GM12878 (cell line): ENCODE measurements at regions of chr10 and their contacts with region 1.

Region 1: DNA sequence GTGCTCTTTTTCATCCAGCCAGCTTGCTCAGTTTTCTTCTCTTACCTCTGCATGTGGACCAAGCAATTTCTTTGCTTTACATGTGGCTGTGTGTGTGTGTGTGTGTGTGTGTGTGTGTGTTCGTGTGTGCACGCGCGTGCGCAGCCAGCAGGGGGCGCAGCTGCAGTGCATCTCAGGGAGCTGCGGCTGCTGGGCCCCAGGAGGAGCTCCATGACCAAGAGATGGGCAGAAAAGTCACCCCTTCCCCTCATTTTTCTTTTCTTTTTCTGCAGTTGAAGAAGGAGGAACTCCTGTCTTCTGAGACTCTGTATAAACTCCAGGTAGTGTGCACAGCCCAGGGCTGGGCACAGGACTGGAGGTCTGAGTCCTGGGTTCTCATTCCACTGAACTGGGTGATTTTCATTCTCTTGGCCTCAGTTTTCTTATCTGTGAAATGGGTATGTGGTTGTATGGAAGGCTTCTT is 41.8 kb downstream of the BLNK start:
- DNase-seq: peak; percentile 24
- ATAC-seq: peak; percentile 86
- H3K4me3 ChIP-seq: no peak overlapping the region
- H3K27ac ChIP-seq: peak overlapping the region; percentile 51
- H3K4me1 ChIP-seq: peaks cover 13% of the 10 kb centered on the region
- H3K27me3 ChIP-seq: no peaks in the 10 kb centered on the region
- CTCF ChIP-seq: peak; percentile 93 to 98 (median 93)
- EP300 ChIP-seq: no peak
- POLR2A ChIP-seq: no peak; the same call in 1 of the 2 replicates
- RAD21 ChIP-seq: peak; percentile 89

Region 2: DNA sequence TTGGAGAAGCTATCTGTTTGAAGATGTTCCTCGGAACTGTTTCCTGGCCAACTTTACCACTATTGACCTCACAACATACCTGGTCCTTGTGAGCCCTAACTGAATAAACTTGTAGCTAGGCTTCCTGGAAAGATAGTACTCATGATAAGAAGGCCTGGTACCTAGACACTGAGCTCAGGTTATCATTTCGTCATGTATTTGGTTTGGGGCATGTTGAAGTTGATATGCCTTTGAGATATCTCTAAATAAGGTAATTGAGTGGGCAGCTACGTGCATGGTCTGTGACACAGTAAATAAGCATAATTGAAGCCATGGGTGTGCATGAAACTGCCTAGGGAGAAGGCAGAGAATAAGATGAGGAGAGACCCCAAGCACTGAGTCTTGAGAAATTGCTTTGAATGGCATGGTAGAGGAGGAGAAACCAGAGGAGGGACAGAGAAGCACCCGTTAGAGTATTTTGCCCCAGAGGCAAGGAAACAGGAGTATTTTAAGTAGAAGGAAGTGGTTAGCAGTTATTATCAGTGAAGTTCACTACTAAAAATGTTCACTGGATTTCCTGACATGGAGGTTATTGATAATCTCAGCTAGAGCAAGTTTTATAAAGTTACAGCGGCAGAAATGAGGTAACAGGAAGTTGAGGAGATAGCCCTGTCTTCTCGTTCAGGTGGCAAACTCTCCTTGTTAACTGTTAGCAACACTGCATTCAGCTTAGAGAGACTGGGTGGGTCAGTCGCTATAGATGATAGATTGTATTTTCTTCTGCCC is 266.2 kb before region 1 on chr10:
- CTCF ChIA-PET with region 1: no interaction called
- POLR2A ChIA-PET with region 1: no interaction called
- RAD21 ChIA-PET with region 1: no interaction called
- SMC1A ChIA-PET with region 1: no interaction called
- in situ Hi-C with region 1: no loop called
- intact Hi-C with region 1: no loop called
- DNase-seq: no peak
- ATAC-seq: peak; percentile 65
- H3K4me3 ChIP-seq: no peak overlapping the region; the same call in 1 of the 2 replicates
- H3K27ac ChIP-seq: peak overlapping the region; percentile 56; the same call in 1 of the 2 replicates
- H3K4me1 ChIP-seq: peaks cover 15% of the 10 kb centered on the region
- H3K27me3 ChIP-seq: no peaks in the 10 kb centered on the region
- CTCF ChIP-seq: no peak
- EP300 ChIP-seq: no peak
- POLR2A ChIP-seq: no peak
- RAD21 ChIP-seq: no peak

Region 3: GRCh38 chr10:96017191-96017687 is 212.4 kb before region 1 on chr10:
- CTCF ChIA-PET with region 1: interaction called, 35 read pairs
- POLR2A ChIA-PET with region 1: no interaction called
- RAD21 ChIA-PET with region 1: interaction called, 21 read pairs
- SMC1A ChIA-PET with region 1: interaction called, 13 read pairs
- in situ Hi-C with region 1: loop called (anchors 5 kb)
- intact Hi-C with region 1: no loop called
- DNase-seq: peak; percentile 32
- ATAC-seq: peak; percentile 99
- H3K4me3 ChIP-seq: no peak overlapping the region
- H3K27ac ChIP-seq: no peak overlapping the region
- H3K4me1 ChIP-seq: no peaks in the 10 kb centered on the region
- H3K27me3 ChIP-seq: no peaks in the 10 kb centered on the region
- CTCF ChIP-seq: peak; percentile 75 to 79 (median 77)
- EP300 ChIP-seq: no peak
- POLR2A ChIP-seq: no peak
- RAD21 ChIP-seq: peak; percentile 90

Region 4: GRCh38 chr10:96252730-96253129 is 23.1 kb after region 1 on chr10:
- CTCF ChIA-PET with region 1: interaction called, 14 read pairs
- POLR2A ChIA-PET with region 1: interaction called, 3 read pairs
- RAD21 ChIA-PET with region 1: interaction called, 23 read pairs
- SMC1A ChIA-PET with region 1: interaction called, 11 read pairs
- in situ Hi-C with region 1: no loop called
- intact Hi-C with region 1: no loop called
- DNase-seq: no peak
- ATAC-seq: no peak; the same call in 2 of the 3 replicates
- H3K4me3 ChIP-seq: no peak overlapping the region
- H3K27ac ChIP-seq: no peak overlapping the region
- H3K4me1 ChIP-seq: peaks cover 7% of the 10 kb centered on the region
- H3K27me3 ChIP-seq: no peaks in the 10 kb centered on the region
- CTCF ChIP-seq: no peak
- EP300 ChIP-seq: no peak
- POLR2A ChIP-seq: no peak
- RAD21 ChIP-seq: no peak

Region 5: DNA sequence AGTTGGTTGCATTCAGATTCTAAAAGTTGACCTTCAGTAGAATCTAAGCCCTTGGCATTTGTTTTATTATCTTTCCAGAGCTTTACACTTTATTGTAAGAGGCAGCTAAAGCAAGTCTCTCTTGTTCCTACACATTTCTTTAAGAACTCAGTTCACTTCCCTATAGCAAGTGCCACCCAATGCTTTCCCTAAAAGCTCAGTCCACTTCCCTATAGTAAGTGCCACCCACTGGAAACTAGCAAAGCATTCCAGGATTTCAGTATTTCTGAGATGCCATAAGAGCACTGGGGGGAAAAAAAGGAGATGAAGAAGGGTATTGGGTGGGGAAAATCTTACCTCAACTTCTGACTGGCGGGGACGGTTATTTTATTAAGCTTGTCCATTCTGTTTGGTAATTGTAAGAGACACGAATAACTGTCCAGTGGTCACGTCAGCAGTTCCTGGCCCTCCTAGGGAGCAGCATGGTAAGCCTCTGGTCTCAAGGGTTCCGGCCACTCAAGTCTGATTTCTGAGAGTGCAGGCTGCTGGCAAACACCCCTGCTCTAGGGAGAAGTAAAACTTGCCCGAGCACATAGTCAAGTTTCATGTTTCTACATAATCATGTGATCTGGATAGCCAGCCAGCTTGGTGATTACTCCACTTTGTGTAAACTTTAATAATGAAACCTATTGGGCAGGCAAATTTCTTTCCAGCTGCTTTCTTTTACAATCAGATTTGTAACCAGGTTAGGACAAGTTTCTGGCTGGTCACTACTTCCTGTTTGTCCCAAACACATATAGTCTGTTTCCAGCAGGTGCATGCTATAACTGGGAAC is 41.6 kb after region 1 on chr10 and contains the start of gene BLNK:
- CTCF ChIA-PET with region 1: interaction called, 219 read pairs
- POLR2A ChIA-PET with region 1: interaction called, 21 read pairs
- RAD21 ChIA-PET with region 1: interaction called, 159 read pairs
- SMC1A ChIA-PET with region 1: interaction called, 123 read pairs
- in situ Hi-C with region 1: no loop called
- intact Hi-C with region 1: loop called (anchors 2 kb)
- DNase-seq: peak; percentile 92
- ATAC-seq: peak; percentile 79
- H3K4me3 ChIP-seq: peak within 1 kb of the TSS; percentile 89
- H3K27ac ChIP-seq: peak within 1 kb of the TSS; percentile 98
- H3K4me1 ChIP-seq: peaks cover 32% of the 10 kb centered on the region
- H3K27me3 ChIP-seq: no peaks in the 10 kb centered on the region
- CTCF ChIP-seq: no peak
- EP300 ChIP-seq: peak in 1 of 2 experiments; percentile 74; a peak in 2 of 4 replicates
- POLR2A ChIP-seq: peak; percentile 93
- RAD21 ChIP-seq: no peak
- polyA plus RNA-seq, gene BLNK: 165 to 201 TPM

Region 6: GRCh38 chr10:96309628-96310320 is 80.2 kb after region 1 on chr10:
- CTCF ChIA-PET with region 1: interaction called, 12 read pairs
- POLR2A ChIA-PET with region 1: no interaction called
- RAD21 ChIA-PET with region 1: interaction called, 7 read pairs
- SMC1A ChIA-PET with region 1: interaction called, 6 read pairs
- in situ Hi-C with region 1: no loop called
- intact Hi-C with region 1: no loop called
- DNase-seq: no peak
- ATAC-seq: no peak
- H3K4me3 ChIP-seq: no peak overlapping the region
- H3K27ac ChIP-seq: no peak overlapping the region
- H3K4me1 ChIP-seq: no peaks in the 10 kb centered on the region
- H3K27me3 ChIP-seq: peaks cover 0 to 2% of the 10 kb centered on the region in 2 experiments; a peak in 1 of 4 replicates
- CTCF ChIP-seq: no peak
- EP300 ChIP-seq: no peak
- POLR2A ChIP-seq: no peak
- RAD21 ChIP-seq: no peak

Region 7: GRCh38 chr10:96339957-96340904 is 110.6 kb after region 1 on chr10:
- CTCF ChIA-PET with region 1: interaction called, 21 read pairs
- POLR2A ChIA-PET with region 1: no interaction called
- RAD21 ChIA-PET with region 1: interaction called, 15 read pairs
- SMC1A ChIA-PET with region 1: interaction called, 14 read pairs
- in situ Hi-C with region 1: no loop called
- intact Hi-C with region 1: loop called (anchors 1 kb)
- DNase-seq: no peak
- ATAC-seq: peak; percentile 95
- H3K4me3 ChIP-seq: no peak overlapping the region
- H3K27ac ChIP-seq: no peak overlapping the region
- H3K4me1 ChIP-seq: no peaks in the 10 kb centered on the region
- H3K27me3 ChIP-seq: no peaks in the 10 kb centered on the region
- CTCF ChIP-seq: peak; percentile 68 to 85 (median 82)
- EP300 ChIP-seq: no peak
- POLR2A ChIP-seq: no peak
- RAD21 ChIP-seq: peak; percentile 89

Region 8: DNA sequence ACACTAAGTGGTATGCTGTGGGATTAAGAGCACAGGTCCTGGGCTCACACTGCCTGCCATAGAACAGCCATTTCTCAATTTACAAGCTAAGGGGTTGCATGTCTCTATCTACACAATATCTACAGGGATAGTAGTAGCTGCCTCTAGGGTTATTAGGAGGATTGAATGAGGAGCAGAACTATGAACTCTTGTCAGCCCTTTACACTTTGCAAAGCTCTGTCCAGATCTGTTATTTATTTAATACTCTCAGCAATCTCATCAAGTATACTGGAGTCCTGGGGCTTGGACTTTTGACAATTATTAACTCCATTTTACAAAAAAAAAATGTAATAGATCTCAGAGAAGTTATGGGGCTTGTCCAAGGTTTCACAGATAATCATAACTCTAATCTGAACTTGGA is 122.4 kb after region 1 on chr10:
- CTCF ChIA-PET with region 1: no interaction called
- POLR2A ChIA-PET with region 1: no interaction called
- RAD21 ChIA-PET with region 1: no interaction called
- SMC1A ChIA-PET with region 1: no interaction called
- in situ Hi-C with region 1: no loop called
- intact Hi-C with region 1: no loop called
- DNase-seq: no peak
- ATAC-seq: no peak
- H3K4me3 ChIP-seq: no peak overlapping the region
- H3K27ac ChIP-seq: no peak overlapping the region
- H3K4me1 ChIP-seq: no peaks in the 10 kb centered on the region
- H3K27me3 ChIP-seq: peaks cover 0 to 3% of the 10 kb centered on the region in 2 experiments; a peak in 2 of 4 replicates
- CTCF ChIP-seq: no peak
- EP300 ChIP-seq: no peak
- POLR2A ChIP-seq: no peak
- RAD21 ChIP-seq: no peak

Region 9: DNA sequence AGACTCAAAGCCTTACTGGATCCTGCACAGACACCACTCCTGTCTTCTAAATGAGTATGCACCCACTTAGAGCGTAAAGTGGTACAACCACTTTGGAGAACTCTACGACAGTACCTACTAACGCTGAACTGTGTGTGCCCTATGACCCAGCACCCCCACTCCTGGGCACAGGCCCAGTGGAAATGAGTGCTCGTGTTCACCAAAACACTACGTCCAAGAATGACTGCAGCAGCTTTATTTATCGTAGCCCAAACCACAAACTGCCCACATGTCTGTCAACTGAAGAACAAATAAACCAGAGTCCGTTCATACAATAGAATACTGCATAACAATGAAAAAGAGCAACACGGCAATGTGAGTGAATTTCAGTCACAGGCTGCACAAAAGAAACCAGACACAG is 248.7 kb after region 1 on chr10:
- CTCF ChIA-PET with region 1: no interaction called
- POLR2A ChIA-PET with region 1: no interaction called
- RAD21 ChIA-PET with region 1: no interaction called
- SMC1A ChIA-PET with region 1: no interaction called
- in situ Hi-C with region 1: no loop called
- intact Hi-C with region 1: no loop called
- DNase-seq: no peak
- ATAC-seq: no peak
- H3K4me3 ChIP-seq: no peak overlapping the region
- H3K27ac ChIP-seq: no peak overlapping the region
- H3K4me1 ChIP-seq: no peaks in the 10 kb centered on the region
- H3K27me3 ChIP-seq: peaks cover 0 to 2% of the 10 kb centered on the region in 2 experiments; a peak in 2 of 4 replicates
- CTCF ChIP-seq: no peak
- EP300 ChIP-seq: no peak
- POLR2A ChIP-seq: no peak
- RAD21 ChIP-seq: no peak

Region 10: DNA sequence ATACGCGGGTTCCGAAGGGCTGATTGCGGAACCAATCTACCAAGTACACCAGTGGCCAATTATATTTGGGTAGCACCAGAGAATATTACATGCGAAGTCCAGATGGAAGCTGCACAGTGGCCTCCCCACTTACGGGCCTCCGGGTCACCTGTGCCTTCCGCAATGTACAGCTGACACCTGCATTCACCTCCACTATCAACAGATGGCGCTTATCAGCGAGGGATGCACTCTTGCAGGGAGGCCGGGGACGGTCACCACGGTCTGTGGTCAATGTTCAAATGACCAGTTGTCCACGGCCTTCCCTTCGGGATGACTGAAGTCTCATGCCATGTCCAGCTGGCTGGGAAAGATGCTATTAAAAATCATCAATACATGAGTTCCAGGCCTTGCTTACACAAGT is 908.6 kb after region 1 on chr10:
- CTCF ChIA-PET with region 1: no interaction called
- POLR2A ChIA-PET with region 1: no interaction called
- RAD21 ChIA-PET with region 1: no interaction called
- SMC1A ChIA-PET with region 1: no interaction called
- in situ Hi-C with region 1: no loop called
- intact Hi-C with region 1: no loop called
- DNase-seq: no peak
- ATAC-seq: 0 out of 3 replicates have a peak, but pooled peaks have one; percentile 20
- H3K4me3 ChIP-seq: no peak overlapping the region
- H3K27ac ChIP-seq: no peak overlapping the region
- H3K4me1 ChIP-seq: no peaks in the 10 kb centered on the region
- H3K27me3 ChIP-seq: peaks cover 0 to 5% of the 10 kb centered on the region in 2 experiments; a peak in 2 of 4 replicates
- CTCF ChIP-seq: peak; percentile 19 to 46 (median 24); a peak in 4 of 6 replicates
- EP300 ChIP-seq: no peak
- POLR2A ChIP-seq: no peak
- RAD21 ChIP-seq: no peak